ENCODE measurements at regions of chr9 and their contacts with region 1.

Region 1: GRCh38 chr9:35603987-35604577 is 980 bp upstream of the TESK1 start:
- DNase-seq: peak; percentile 98 to 99 (median 99)
- H3K4me3 ChIP-seq: peak overlapping the region; percentile 75 to 84
- H3K4me3 Mint-ChIP-seq: peak overlapping the region; percentile 95 to 100 (median 98)
- H3K27ac ChIP-seq: peak overlapping the region; percentile 85
- H3K27ac Mint-ChIP-seq: peak overlapping the region; percentile 96 to 100 (median 99)
- H3K4me1 ChIP-seq: peaks cover 37% of the 10 kb centered on the region
- H3K4me1 Mint-ChIP-seq: peaks cover 25 to 47% (median 32%) of the 10 kb centered on the region in 4 donors
- H3K27me3 ChIP-seq: no peaks in the 10 kb centered on the region
- H3K27me3 Mint-ChIP-seq: no peaks in the 10 kb centered on the region

Region 2: GRCh38 chr9:35102926-35103659 is 501.0 kb before region 1 on chr9 and contains the start of gene STOML2:
- CTCF ChIA-PET with region 1: no interaction called
- POLR2A ChIA-PET with region 1: interaction called, 4 read pairs
- intact Hi-C with region 1: loop called (anchors 1 kb)
- DNase-seq: peak; percentile 91 to 96 (median 93)
- H3K4me3 ChIP-seq: peak within 1 kb of the TSS; percentile 83 to 96
- H3K4me3 Mint-ChIP-seq: peak within 1 kb of the TSS; percentile 90 to 98 (median 94)
- H3K27ac ChIP-seq: peak within 1 kb of the TSS; percentile 95
- H3K27ac Mint-ChIP-seq: peak within 1 kb of the TSS; percentile 97 to 100 (median 99)
- H3K4me1 ChIP-seq: peaks cover 23% of the 10 kb centered on the region
- H3K4me1 Mint-ChIP-seq: peaks cover 19 to 46% (median 30%) of the 10 kb centered on the region in 4 donors
- H3K27me3 ChIP-seq: no peaks in the 10 kb centered on the region
- H3K27me3 Mint-ChIP-seq: no peaks in the 10 kb centered on the region
- total RNA-seq, gene STOML2: 42.9 to 45.3 TPM

Region 3: DNA sequence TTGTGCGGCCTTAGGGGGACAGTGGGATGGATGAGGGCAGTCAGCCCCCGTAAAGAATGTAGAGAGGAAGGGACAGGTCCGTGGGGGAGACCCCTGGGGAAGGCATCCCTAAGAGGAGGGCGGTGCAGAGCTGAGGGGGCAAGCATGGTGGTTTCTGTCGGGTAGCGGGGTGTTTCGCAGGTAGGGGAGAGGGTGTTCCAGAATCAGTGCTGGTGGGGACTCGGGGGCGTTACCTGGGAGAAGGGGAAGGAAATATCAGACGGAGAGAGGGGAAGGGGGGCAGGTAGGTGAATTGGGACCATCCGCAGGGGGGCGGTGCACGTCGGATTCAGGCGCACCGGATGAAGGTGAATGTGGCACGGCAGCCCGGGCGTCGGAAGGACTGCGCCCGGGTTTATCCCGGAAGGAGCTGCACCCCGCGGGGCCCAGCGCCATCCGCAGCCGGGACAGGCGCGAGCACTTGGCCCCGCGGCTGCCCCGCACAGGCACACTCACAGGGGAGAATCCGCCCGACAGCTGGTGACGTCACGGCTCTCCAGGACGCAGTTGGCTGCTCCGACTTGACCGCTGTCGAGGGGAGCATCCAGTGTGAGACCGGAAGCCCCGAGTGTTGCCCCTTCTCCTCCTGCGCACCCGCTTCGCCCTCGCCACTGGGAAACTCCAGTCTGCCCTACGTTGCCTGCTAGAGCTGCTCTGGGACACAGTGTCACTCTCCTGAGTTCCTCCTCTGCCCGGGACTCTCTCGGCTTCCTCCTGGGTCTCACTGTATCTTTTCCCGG is 12.8 kb after region 1 on chr9:
- CTCF ChIA-PET with region 1: interaction called, 35 read pairs
- POLR2A ChIA-PET with region 1: interaction called, 71 read pairs
- intact Hi-C with region 1: loop called (anchors 1 kb)
- DNase-seq: peak; percentile 63 to 75 (median 64)
- H3K4me3 ChIP-seq: peak overlapping the region; percentile 63 to 64
- H3K4me3 Mint-ChIP-seq: peak overlapping the region; percentile 84 to 91 (median 88)
- H3K27ac ChIP-seq: peak overlapping the region; percentile 60
- H3K27ac Mint-ChIP-seq: peak overlapping the region; percentile 89 to 95 (median 93)
- H3K4me1 ChIP-seq: peaks cover 36% of the 10 kb centered on the region
- H3K4me1 Mint-ChIP-seq: peaks cover 26 to 58% (median 35%) of the 10 kb centered on the region in 4 donors
- H3K27me3 ChIP-seq: no peaks in the 10 kb centered on the region
- H3K27me3 Mint-ChIP-seq: no peaks in the 10 kb centered on the region

Region 4: GRCh38 chr9:35829084-35829763 is 225.1 kb after region 1 on chr9 and contains the start of gene TMEM8B:
- CTCF ChIA-PET with region 1: interaction called, 5 read pairs
- POLR2A ChIA-PET with region 1: no interaction called
- intact Hi-C with region 1: loop called (anchors 1 kb)
- DNase-seq: peak; percentile 85 to 96 (median 88)
- H3K4me3 ChIP-seq: peak within 1 kb of the TSS; percentile 61 to 70
- H3K4me3 Mint-ChIP-seq: peak within 1 kb of the TSS; percentile 92 to 100 (median 96)
- H3K27ac ChIP-seq: peak within 1 kb of the TSS; percentile 66
- H3K27ac Mint-ChIP-seq: peak within 1 kb of the TSS; percentile 74 to 99 (median 98)
- H3K4me1 ChIP-seq: peaks cover 20% of the 10 kb centered on the region
- H3K4me1 Mint-ChIP-seq: peaks cover 23 to 39% (median 35%) of the 10 kb centered on the region in 4 donors
- H3K27me3 ChIP-seq: no peaks in the 10 kb centered on the region
- H3K27me3 Mint-ChIP-seq: no peaks in the 10 kb centered on the region
- total RNA-seq, gene TMEM8B: 7.4 to 10.5 TPM

Measured in CD4-positive, alpha-beta memory T cell (primary cell).